ENCODE measurements at regions of chr10 and their contacts with region 1.

Region 1: GRCh38 chr10:99435986-99436638 is 5.7 kb upstream of the GOT1 start:
- DNase-seq: peak; percentile 72
- H3K4me3 ChIP-seq: no peak overlapping the region
- H3K27ac ChIP-seq: no peak overlapping the region
- H3K4me1 ChIP-seq: no peaks in the 10 kb centered on the region
- H3K27me3 ChIP-seq: no peaks in the 10 kb centered on the region
- CTCF ChIP-seq: peak; percentile 69

Region 2: GRCh38 chr10:99292159-99292558 is 144.0 kb before region 1 on chr10:
- CTCF ChIA-PET with region 1: no interaction called
- POLR2A ChIA-PET with region 1: no interaction called
- intact Hi-C with region 1: no loop called
- DNase-seq: no peak
- H3K4me3 ChIP-seq: no peak overlapping the region
- H3K27ac ChIP-seq: no peak overlapping the region
- H3K4me1 ChIP-seq: no peaks in the 10 kb centered on the region
- H3K27me3 ChIP-seq: peaks cover 19% of the 10 kb centered on the region
- CTCF ChIP-seq: no peak

Region 3: GRCh38 chr10:99548041-99548530 is 112.0 kb after region 1 on chr10:
- CTCF ChIA-PET with region 1: no interaction called
- POLR2A ChIA-PET with region 1: no interaction called
- intact Hi-C with region 1: loop called (anchors 5 kb)
- DNase-seq: no peak
- H3K4me3 ChIP-seq: no peak overlapping the region
- H3K27ac ChIP-seq: no peak overlapping the region
- H3K4me1 ChIP-seq: peaks cover 6% of the 10 kb centered on the region
- H3K27me3 ChIP-seq: peaks cover 46% of the 10 kb centered on the region
- CTCF ChIP-seq: peak; percentile 48

Region 4: GRCh38 chr10:99612167-99612831 is 176.2 kb after region 1 on chr10:
- CTCF ChIA-PET with region 1: interaction called, 17 read pairs
- POLR2A ChIA-PET with region 1: no interaction called
- intact Hi-C with region 1: loop called (anchors 1 kb)
- DNase-seq: peak; percentile 84
- H3K4me3 ChIP-seq: no peak overlapping the region
- H3K27ac ChIP-seq: no peak overlapping the region
- H3K4me1 ChIP-seq: peaks cover 4% of the 10 kb centered on the region
- H3K27me3 ChIP-seq: no peaks in the 10 kb centered on the region
- CTCF ChIP-seq: peak; percentile 84

Region 5: DNA sequence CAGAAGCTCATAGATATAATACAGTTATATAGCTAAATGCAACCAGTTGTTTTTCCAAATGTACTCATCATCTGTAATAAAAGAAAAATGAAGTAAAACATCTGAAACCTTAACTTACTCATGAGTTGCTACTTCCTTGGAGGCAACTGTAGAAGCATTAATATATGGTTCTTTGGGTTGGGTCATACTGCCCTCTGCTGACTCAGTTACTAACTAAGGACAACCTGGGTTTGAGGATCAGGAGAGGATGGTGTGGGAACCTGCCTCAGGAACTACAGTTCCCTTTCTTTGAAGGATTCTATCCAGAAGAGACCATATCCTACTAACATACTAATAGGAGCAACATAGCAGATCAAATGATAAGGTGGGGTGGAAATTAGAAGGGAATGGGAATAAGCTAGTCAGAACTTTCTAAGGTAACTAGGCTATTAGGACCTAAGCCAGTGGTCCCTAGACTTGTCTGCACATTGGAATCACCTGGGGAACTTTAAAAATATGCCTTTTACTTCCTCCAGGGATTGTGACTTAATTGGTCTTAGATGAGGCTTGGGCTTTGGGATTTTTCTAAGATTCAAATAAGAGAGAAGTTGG is 275.1 kb after region 1 on chr10:
- CTCF ChIA-PET with region 1: no interaction called
- POLR2A ChIA-PET with region 1: no interaction called
- intact Hi-C with region 1: loop called (anchors 2 kb)
- DNase-seq: peak; percentile 60
- H3K4me3 ChIP-seq: no peak overlapping the region
- H3K27ac ChIP-seq: no peak overlapping the region
- H3K4me1 ChIP-seq: no peaks in the 10 kb centered on the region
- H3K27me3 ChIP-seq: no peaks in the 10 kb centered on the region
- CTCF ChIP-seq: peak; percentile 66

Region 6: GRCh38 chr10:99732033-99732912 is 296.2 kb after region 1 on chr10 and contains the starts of genes COX15 and CUTC:
- CTCF ChIA-PET with region 1: no interaction called
- POLR2A ChIA-PET with region 1: interaction called, 15 read pairs
- intact Hi-C with region 1: no loop called
- DNase-seq: peak; percentile 99
- H3K4me3 ChIP-seq: peak within 1 kb of the TSS; percentile 80
- H3K27ac ChIP-seq: peak within 1 kb of the TSS; percentile 87
- H3K4me1 ChIP-seq: no peaks in the 10 kb centered on the region
- H3K27me3 ChIP-seq: no peaks in the 10 kb centered on the region
- CTCF ChIP-seq: peak; percentile 35
- total RNA-seq, gene COX15: 46.1 and 48.3 TPM in 2 replicates
- total RNA-seq, gene CUTC: 19.2 and 21.3 TPM in 2 replicates